Activated naive CD4-positive, alpha-beta T cell treated with anti-CD3 and anti-CD28 coated beads for 36 hours (primary cell): ENCODE measurements at regions of chr5 and their contacts with region 1.

Region 1: GRCh38 chr5:138065102-138065501 is 18.7 kb upstream of the WNT8A start:
- DNase-seq: peak; percentile 14
- H3K4me3 Mint-ChIP-seq: no peak overlapping the region
- H3K27ac Mint-ChIP-seq: no peak overlapping the region
- H3K4me1 Mint-ChIP-seq: peaks cover 4% of the 10 kb centered on the region
- H3K27me3 Mint-ChIP-seq: no peaks in the 10 kb centered on the region

Region 2: DNA sequence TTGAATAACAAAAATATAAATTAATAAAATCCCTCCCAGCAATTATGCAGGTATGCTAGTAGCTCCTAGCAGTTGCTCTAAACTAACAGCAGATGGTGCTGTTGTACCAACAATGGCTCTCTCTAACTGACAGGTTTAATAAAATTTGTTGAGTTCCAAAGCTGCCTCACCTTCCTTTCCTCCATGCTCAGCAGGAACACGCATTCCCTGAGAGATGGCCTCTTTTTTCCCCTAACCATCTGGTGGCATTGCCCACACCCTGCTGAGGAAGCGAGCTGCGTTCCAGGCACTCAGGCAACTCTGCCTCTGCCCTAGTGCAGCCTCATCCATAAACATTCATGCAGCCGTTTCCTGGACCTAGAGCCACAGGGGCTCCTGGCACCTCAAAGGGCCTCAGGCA is 435.5 kb before region 1 on chr5:
- CTCF ChIA-PET with region 1: interaction called, 11 read pairs
- intact Hi-C with region 1: loop called (anchors 1 kb)
- DNase-seq: peak; percentile 35
- H3K4me3 Mint-ChIP-seq: no peak overlapping the region
- H3K27ac Mint-ChIP-seq: no peak overlapping the region
- H3K4me1 Mint-ChIP-seq: no peaks in the 10 kb centered on the region
- H3K27me3 Mint-ChIP-seq: no peaks in the 10 kb centered on the region

Region 3: GRCh38 chr5:137901011-137901817 is 163.9 kb before region 1 on chr5:
- CTCF ChIA-PET with region 1: no interaction called
- intact Hi-C with region 1: no loop called
- DNase-seq: no peak
- H3K4me3 Mint-ChIP-seq: no peak overlapping the region
- H3K27ac Mint-ChIP-seq: no peak overlapping the region
- H3K4me1 Mint-ChIP-seq: no peaks in the 10 kb centered on the region
- H3K27me3 Mint-ChIP-seq: peaks cover 4% of the 10 kb centered on the region

Region 4: GRCh38 chr5:138054847-138055558 is 10.1 kb before region 1 on chr5:
- CTCF ChIA-PET with region 1: interaction called, 13 read pairs
- intact Hi-C with region 1: no loop called
- DNase-seq: no peak
- H3K4me3 Mint-ChIP-seq: no peak overlapping the region
- H3K27ac Mint-ChIP-seq: no peak overlapping the region
- H3K4me1 Mint-ChIP-seq: peaks cover 8% of the 10 kb centered on the region
- H3K27me3 Mint-ChIP-seq: no peaks in the 10 kb centered on the region